BJ (cell line): ENCODE measurements at regions of chr7 and their contacts with region 1.

Region 1: DNA sequence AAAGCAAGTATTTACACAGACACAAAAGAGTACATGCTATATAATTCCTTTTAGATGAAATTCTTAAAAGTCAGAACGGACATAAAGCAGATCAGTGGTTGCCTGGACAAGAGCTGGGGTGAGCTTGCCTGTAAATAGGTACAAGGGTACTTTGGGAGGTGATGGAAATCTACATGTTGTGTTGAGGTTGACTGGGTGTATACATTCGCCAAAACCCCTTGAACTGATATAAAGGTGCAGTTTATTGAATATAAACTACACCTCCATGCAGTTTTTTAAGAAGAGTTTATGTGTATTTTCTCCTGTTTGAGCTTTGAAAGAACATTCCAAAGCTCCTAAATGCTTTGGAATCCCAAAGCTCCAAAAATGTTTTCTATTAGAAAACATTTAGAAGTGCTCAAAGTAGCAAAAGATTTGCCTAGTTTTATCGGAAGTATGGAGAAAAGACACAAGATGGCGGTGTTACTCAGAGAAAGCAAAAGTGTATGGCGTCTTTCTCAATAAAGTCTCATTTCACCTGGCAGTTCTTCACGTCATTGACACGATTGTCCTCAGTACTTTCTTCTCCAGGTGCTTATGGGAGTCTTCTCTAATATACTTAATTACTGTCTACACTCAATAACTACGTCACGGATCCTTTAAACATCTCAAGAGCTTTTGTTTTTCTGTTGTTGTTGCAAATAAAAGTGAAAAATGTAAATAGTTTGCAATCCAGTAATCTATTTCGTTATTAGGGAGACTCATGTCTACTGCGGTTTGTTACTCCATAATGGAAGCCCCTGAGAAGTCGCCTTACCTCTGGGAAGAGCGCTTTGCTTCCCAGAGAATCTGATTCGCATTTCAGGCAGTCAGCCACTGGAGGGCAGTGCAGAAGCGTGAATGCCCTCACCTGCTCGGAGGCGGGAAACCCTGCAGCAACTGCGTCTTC is 14.7 kb upstream of the SEC61G start:
- DNase-seq: peak; percentile 26
- H3K4me3 ChIP-seq: peak overlapping the region; percentile 34
- H3K27me3 ChIP-seq: no peaks in the 10 kb centered on the region
- CTCF ChIP-seq: peak; percentile 83

Region 2: DNA sequence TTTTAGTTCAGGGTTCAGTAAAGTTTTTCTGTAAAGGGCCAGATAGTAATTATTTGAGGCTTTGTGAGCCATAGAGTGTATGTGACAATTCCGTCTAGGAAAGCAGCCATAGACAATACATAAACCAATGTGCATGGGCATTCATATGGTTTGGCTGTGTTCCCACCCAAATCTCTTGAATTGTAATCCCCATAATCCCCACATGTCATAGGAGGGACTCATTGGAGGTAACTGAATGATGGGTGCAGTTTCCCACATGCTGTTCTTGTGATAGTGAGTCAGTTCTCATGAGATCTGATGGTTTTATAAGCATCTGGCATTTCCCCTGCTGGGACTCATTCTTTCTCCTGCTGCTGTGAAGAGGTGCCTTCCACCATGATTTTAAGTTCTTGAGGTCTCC is 44.6 kb before region 1 on chr7:
- CTCF ChIA-PET with region 1: no interaction called
- POLR2A ChIA-PET with region 1: no interaction called
- DNase-seq: no peak
- H3K4me3 ChIP-seq: no peak overlapping the region
- H3K27me3 ChIP-seq: no peaks in the 10 kb centered on the region
- CTCF ChIP-seq: no peak

Region 3: GRCh38 chr7:54758702-54759592 is 14.8 kb before region 1 on chr7 and contains the start of gene SEC61G:
- CTCF ChIA-PET with region 1: interaction called, 34 read pairs
- POLR2A ChIA-PET with region 1: no interaction called
- DNase-seq: peak; percentile 89
- H3K4me3 ChIP-seq: peak within 1 kb of the TSS; percentile 94
- H3K27me3 ChIP-seq: no peaks in the 10 kb centered on the region
- CTCF ChIP-seq: no peak
- polyA plus RNA-seq, gene SEC61G: 91.4 and 236 TPM in 2 replicates

Region 4: GRCh38 chr7:54796150-54796549 is 22.4 kb after region 1 on chr7:
- CTCF ChIA-PET with region 1: interaction called, 15 read pairs
- POLR2A ChIA-PET with region 1: no interaction called
- DNase-seq: no peak
- H3K4me3 ChIP-seq: no peak overlapping the region
- H3K27me3 ChIP-seq: no peaks in the 10 kb centered on the region; the same call in 1 of the 2 replicates
- CTCF ChIP-seq: no peak

Region 5: DNA sequence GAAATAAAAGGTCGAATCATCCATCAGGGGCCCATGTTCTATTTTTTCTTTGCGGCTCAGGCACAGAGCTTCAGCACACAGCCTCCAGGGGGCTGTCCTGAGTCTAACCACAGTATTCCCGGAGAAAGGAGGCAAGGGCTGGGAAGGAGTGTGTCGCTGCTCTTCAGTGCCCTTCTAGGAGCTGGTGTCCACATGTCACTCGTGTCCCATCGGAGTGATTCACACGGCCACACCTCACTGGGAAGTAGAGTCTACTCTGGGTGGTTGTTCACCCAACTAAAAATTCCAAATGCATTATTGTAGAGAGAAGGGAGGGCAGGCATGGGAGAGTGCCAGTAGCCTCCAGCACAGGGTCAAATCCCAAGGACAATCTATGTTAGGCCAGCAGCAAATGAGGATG is 476.6 kb after region 1 on chr7:
- CTCF ChIA-PET with region 1: interaction called, 398 read pairs
- POLR2A ChIA-PET with region 1: no interaction called
- DNase-seq: no peak
- H3K4me3 ChIP-seq: no peak overlapping the region
- H3K27me3 ChIP-seq: no peaks in the 10 kb centered on the region
- CTCF ChIP-seq: peak; percentile 50

Region 6: DNA sequence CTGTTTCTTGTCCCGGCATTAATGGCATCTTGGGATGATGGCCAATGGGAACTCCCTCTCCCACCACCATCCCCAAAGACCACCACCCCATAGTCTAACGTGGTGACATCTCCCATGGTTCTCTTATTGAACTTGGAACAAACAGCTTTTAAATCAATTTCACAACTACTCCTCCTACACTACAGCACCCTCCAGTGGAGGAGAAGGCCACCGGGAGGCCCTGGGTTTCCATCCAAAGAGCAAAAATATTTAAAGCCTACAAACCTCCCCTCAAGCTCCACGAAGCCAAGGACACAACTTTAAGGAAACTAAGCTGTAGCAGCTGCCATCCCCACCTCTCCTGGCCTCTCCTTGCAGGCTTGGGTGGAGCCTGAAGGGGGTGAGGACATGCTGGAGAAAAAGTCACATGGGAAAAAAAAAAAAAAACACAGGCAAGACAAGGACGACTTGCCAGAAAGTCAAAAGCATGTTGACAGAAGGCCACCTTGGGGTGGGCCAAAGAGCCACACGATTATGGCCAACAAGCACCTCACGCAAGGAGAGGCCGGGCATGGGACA is 497.4 kb after region 1 on chr7:
- CTCF ChIA-PET with region 1: interaction called, 48 read pairs
- POLR2A ChIA-PET with region 1: no interaction called
- DNase-seq: no peak
- H3K4me3 ChIP-seq: no peak overlapping the region
- H3K27me3 ChIP-seq: peaks cover 24% of the 10 kb centered on the region
- CTCF ChIP-seq: peak; percentile 70